OCI-LY7 (cell line): ENCODE measurements at regions of chr20 and their contacts with region 1.

Region 1: DNA sequence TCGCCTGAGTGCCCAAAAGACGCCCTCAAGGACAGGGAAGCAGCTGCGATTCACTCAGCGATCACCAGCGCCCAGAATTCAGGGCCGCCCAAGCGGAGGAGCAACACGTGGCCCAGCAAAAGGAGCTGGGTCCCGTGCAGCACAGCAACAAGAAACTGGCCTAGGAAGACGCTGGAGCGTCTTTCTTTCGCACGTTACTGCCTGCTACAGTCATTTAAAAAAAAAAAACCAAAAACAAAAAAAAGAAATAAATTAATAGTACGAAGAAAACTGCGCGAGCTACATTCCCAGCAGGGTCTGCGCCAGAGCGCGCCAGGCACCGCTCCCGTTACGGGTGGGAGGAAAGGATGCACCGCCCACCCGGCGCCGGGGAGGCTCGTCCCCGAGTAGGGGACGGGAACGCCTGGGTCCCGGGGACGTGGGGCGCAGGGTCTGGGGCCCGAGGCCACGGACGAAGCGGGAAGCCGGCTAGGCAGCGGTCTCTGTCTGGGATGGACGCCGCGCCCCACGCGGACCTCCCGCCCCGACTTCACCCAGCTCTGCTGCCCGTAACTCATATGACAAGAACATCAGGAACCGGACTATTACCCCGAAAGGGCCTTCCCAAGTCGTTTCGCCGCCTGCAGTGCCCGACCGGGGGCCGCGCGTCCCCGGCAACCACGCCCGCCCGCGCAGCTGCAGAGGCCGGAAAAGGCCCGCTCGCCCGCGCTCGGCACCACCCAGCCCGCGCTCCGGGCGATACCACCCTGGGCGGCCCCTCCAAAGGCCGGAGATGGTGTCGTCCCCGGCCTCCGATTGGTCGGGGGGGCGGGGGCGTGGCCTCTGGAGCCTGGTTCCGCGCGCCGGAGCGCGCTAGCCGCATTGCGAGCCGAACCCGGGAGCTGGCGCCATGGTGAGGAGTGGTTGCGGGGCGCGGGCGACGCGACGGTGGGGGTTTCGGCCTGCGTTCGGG is at the start of gene NOP56:
- DNase-seq: peak; percentile 94
- H3K4me3 ChIP-seq: peak within 1 kb of the TSS; percentile 93
- H3K27ac ChIP-seq: peak within 1 kb of the TSS; percentile 88
- H3K4me1 ChIP-seq: peaks cover 27% of the 10 kb centered on the region
- CTCF ChIP-seq: no peak
- total RNA-seq, gene NOP56: 580 and 640 TPM in 2 replicates

Region 2: DNA sequence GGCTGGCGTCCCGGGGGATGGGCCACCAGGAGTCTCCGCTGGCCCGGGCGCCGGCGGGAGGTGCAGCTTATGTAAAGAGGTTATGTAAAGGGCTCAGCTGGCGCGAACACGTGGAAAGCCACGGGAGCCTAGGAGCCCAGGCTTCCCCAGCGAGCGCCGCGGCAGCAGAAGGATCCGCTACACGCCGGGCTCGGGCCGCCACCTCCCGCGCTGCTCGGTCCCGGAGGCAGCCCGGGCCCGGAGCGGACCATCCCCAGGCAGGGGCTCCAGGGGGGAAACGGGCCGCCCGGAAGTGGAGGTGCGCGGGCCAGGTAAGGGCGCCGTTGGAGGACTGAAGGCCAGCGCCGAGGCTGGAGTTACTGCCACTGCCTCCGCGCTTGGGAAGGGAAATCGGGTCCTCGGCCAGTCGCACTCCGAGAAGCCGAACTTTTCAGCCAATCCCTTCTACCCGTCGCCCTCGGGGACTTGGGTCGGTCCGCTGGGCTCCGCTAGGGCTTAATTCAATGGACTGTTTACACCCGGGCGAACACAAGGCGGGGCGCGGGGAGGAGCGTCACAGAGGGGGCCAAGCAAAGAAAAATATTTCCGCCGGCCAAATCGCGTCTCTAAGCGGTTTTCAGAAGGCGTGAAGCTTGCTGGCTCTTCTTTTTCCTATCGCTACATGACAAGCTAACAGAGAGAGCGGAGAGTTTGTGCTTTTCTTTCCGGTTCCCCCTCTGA is 550.0 kb before region 1 on chr20:
- CTCF ChIA-PET with region 1: no interaction called
- POLR2A ChIA-PET with region 1: no interaction called
- intact Hi-C with region 1: loop called (anchors 5 kb)
- DNase-seq: peak; percentile 95
- H3K4me3 ChIP-seq: peak overlapping the region; percentile 93
- H3K27ac ChIP-seq: peak overlapping the region; percentile 85
- H3K4me1 ChIP-seq: peaks cover 26% of the 10 kb centered on the region
- CTCF ChIP-seq: no peak

Region 3: DNA sequence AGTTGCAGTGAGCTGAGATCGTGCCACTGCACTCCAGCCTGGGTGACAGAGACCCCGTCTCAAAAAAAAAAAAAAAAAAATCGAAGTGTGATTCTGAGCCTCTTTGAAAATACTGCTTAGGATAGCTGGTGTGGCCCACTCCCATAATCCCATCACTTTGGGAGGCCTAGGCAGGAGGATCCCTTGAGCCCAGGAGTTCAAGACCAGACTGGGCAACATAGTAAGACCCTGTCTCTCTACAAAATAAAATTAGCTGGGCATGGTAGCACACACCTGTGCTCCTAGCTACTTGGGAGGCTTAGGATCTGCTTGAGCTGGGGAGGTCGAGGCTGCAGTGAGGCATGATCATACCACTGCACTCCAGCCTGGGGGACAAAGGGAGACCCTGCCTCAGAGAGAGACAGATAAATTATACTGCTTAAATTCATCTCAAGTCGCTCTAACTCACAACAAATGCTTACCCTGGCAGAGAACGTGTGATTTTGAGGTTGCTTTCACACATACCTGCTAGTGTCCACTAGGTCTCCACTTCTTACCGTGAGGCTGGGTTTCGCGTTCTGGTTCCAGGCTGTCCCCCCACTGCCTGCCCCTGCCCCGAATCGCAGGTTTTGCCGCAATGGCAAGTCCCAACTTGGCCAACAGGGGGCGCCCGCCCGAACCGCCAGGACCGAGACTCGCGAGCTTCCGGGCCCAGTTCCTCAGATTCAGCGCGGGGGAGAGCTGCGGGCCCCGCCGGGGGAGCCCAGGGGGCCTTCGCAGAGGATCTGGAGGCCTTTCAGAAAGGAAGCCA is 127.9 kb before region 1 on chr20:
- CTCF ChIA-PET with region 1: interaction called, 3 read pairs
- POLR2A ChIA-PET with region 1: interaction called, 7 read pairs
- intact Hi-C with region 1: loop called (anchors 5 kb)
- DNase-seq: peak; percentile 84
- H3K4me3 ChIP-seq: peak overlapping the region; percentile 69
- H3K27ac ChIP-seq: no peak overlapping the region
- H3K4me1 ChIP-seq: peaks cover 8% of the 10 kb centered on the region
- CTCF ChIP-seq: peak; percentile 95

Region 4: DNA sequence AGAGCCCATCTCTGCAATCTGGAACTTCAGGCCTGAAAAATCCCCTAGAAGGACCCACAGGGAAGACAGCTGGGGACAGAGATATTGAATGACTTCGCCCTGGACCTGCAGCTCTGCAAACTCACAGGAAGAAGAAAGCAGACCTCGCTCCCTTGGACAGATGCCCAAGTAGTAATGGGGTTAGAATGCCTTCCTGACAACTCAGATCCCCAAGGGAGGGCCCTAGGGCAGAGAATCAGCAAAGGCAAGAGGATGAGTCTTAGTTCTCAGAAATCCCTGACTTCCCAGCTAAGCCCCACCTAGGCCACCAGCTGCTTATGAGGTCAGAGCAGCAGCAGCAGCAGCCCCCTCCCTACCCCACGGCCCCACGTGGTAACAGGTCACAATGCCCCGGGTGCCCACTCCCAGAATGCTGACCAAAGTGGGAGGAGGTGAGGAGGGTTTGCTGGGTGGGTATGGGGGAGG is 162.6 kb after region 1 on chr20 and contains the start of gene C20orf141:
- CTCF ChIA-PET with region 1: no interaction called
- POLR2A ChIA-PET with region 1: no interaction called
- intact Hi-C with region 1: no loop called
- DNase-seq: no peak
- H3K4me3 ChIP-seq: no peak within 1 kb of the TSS
- H3K27ac ChIP-seq: no peak within 1 kb of the TSS
- H3K4me1 ChIP-seq: no peaks in the 10 kb centered on the region
- CTCF ChIP-seq: no peak
- total RNA-seq, gene C20orf141: not detected in 2 replicates

Region 5: GRCh38 chr20:2845607-2846006 is 193.6 kb after region 1 on chr20:
- CTCF ChIA-PET with region 1: no interaction called
- POLR2A ChIA-PET with region 1: no interaction called
- intact Hi-C with region 1: no loop called
- DNase-seq: no peak
- H3K4me3 ChIP-seq: no peak overlapping the region
- H3K27ac ChIP-seq: no peak overlapping the region
- H3K4me1 ChIP-seq: peaks cover 6% of the 10 kb centered on the region
- CTCF ChIP-seq: no peak

Region 6: DNA sequence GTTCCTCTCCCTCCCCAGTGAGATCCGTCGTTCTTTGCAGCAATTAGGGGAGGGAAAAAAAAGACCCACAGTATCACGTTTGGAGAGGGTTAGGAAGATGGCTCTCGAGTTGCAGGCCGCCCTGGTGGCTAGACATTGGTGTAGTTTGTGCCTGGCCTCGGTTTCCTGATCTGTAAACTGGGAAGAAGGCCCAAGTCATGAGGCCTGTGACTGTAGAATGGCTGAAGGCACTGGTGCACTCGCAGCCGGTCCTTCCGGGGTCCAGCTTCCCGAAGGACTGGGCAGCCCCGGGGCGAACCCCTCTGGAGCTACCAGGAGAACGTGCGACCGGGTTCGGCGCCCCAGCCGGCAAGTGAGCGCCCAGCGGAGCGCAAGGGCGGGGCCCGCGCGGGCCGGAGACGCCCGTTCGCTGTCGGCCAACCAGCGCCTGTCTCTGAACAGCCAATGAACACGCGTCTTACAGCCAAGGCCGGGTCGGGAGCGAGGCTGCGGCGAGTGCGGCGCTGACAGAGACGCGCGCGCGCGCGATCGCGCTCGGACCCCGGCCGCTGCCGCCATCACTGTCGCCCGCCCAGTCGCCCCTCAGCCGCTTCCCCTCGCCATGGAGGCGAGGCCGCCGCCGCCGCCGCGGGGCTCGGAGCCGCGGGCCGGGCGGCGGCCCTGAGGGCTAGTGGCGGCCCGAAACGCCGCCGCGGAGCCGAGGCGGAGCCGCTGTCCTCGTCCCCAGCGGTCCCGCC is 221.1 kb after region 1 on chr20 and contains the start of gene PTPRA:
- CTCF ChIA-PET with region 1: no interaction called
- POLR2A ChIA-PET with region 1: interaction called, 3 read pairs
- intact Hi-C with region 1: loop called (anchors 2 kb)
- DNase-seq: peak; percentile 95
- H3K4me3 ChIP-seq: peak within 1 kb of the TSS; percentile 87
- H3K27ac ChIP-seq: peak within 1 kb of the TSS; percentile 56
- H3K4me1 ChIP-seq: peaks cover 33% of the 10 kb centered on the region
- CTCF ChIP-seq: no peak
- total RNA-seq, gene PTPRA: 28.1 and 33.3 TPM in 2 replicates